ENCODE measurements at regions of chr6 and their contacts with region 1.

Region 1: DNA sequence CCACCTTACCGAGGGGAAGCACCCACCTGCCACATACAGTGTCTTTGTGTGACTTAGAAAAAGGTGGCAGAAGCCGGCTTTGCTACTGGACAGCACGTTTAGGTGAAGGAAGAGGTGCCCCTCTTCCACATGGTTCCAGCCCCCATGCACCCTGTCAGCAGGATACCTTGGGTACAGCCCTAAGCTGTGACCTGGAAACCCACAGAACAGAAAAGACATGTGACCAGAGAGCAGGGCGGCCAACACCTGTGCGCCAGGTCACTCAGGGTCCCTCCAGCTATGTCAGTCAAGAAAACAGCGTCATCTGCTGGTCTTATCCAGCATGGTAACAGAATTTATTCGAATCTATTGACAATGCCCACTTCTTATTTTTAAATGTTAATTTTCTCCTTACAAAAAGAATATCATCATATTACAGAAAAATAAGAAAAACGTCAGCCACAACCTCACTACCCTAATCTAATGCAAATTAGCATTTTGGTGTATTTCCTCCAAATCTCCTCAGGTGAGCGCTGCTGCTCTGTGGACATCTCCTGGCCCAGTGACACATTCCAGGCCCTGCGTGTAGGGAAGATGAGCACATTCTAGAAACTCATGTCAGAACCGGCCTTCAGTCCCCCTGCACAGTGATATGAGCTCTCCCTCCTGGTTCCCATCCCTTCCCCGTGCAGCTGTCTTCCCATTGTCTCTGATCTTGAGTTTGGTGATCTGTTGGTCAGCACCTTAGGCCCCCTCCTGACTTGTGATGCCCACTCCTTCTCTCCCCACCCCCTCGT is 37.2 kb downstream of the GTF2H5 start:
- DNase-seq: no peak
- ATAC-seq: peak; percentile 51; the same call in 1 of the 2 replicates
- H3K4me3 ChIP-seq: no peak overlapping the region
- H3K27ac ChIP-seq: no peak overlapping the region
- H3K4me1 ChIP-seq: no peaks in the 10 kb centered on the region
- H3K27me3 ChIP-seq: 0 out of 2 replicates have a peak, but pooled peaks cover 2% of the 10 kb centered on the region
- CTCF ChIP-seq: peak; percentile 68

Region 2: GRCh38 chr6:158170656-158171081 is 34.7 kb before region 1 on chr6:
- CTCF ChIA-PET with region 1: interaction called, 17 read pairs
- POLR2A ChIA-PET with region 1: no interaction called
- in situ Hi-C with region 1: no loop called
- intact Hi-C with region 1: no loop called
- DNase-seq: no peak
- ATAC-seq: no peak
- H3K4me3 ChIP-seq: no peak overlapping the region
- H3K27ac ChIP-seq: no peak overlapping the region
- H3K4me1 ChIP-seq: peaks cover 12% of the 10 kb centered on the region
- H3K27me3 ChIP-seq: no peaks in the 10 kb centered on the region
- CTCF ChIP-seq: no peak

Region 3: GRCh38 chr6:158231551-158232315 is 26.4 kb after region 1 on chr6:
- CTCF ChIA-PET with region 1: no interaction called
- POLR2A ChIA-PET with region 1: no interaction called
- in situ Hi-C with region 1: no loop called
- intact Hi-C with region 1: no loop called
- DNase-seq: no peak
- ATAC-seq: peak; percentile 90
- H3K4me3 ChIP-seq: peak overlapping the region; percentile 78 to 86
- H3K27ac ChIP-seq: peak overlapping the region; percentile 98
- H3K4me1 ChIP-seq: peaks cover 15% of the 10 kb centered on the region
- H3K27me3 ChIP-seq: no peaks in the 10 kb centered on the region
- CTCF ChIP-seq: no peak

Region 4: GRCh38 chr6:158752613-158753012 is 547.3 kb after region 1 on chr6:
- CTCF ChIA-PET with region 1: no interaction called
- POLR2A ChIA-PET with region 1: interaction called, 11 read pairs
- in situ Hi-C with region 1: no loop called
- intact Hi-C with region 1: no loop called
- DNase-seq: no peak
- ATAC-seq: no peak
- H3K4me3 ChIP-seq: no peak overlapping the region
- H3K27ac ChIP-seq: no peak overlapping the region
- H3K4me1 ChIP-seq: no peaks in the 10 kb centered on the region
- H3K27me3 ChIP-seq: no peaks in the 10 kb centered on the region
- CTCF ChIP-seq: no peak